ENCODE measurements at regions of chr9 and their contacts with region 1.

Region 1: GRCh38 chr9:7910426-7911020 is 110.9 kb upstream of the DMAC1 start:
- DNase-seq: peak in 1 of 2 donors; percentile 15
- ATAC-seq: peak in 5 of 8 donors; percentile 42 to 76 (median 63)
- H3K4me3 ChIP-seq: no peak overlapping the region
- H3K27ac ChIP-seq: peak overlapping the region in 2 of 10 donors; percentile 16 to 28
- H3K4me1 ChIP-seq: peaks cover 0 to 5% (median 0%) of the 10 kb centered on the region in 9 donors
- H3K27me3 ChIP-seq: no peaks in the 10 kb centered on the region
- CTCF ChIP-seq: no peak

Region 2: GRCh38 chr9:7402334-7403027 is 508.0 kb before region 1 on chr9:
- intact Hi-C with region 1: no loop called
- DNase-seq: no peak
- ATAC-seq: peak in 3 of 8 donors; percentile 17 to 35 (median 18)
- H3K4me3 ChIP-seq: no peak overlapping the region
- H3K27ac ChIP-seq: peak overlapping the region in 3 of 10 donors; percentile 2 to 24 (median 24)
- H3K4me1 ChIP-seq: peaks cover 0 to 28% (median 11%) of the 10 kb centered on the region in 9 donors
- H3K27me3 ChIP-seq: no peaks in the 10 kb centered on the region
- CTCF ChIP-seq: no peak

Region 3: GRCh38 chr9:7859701-7860334 is 50.7 kb before region 1 on chr9:
- intact Hi-C with region 1: loop called in 1 of 10 experiments (anchors 10 kb)
- DNase-seq: no peak
- ATAC-seq: no peak
- H3K4me3 ChIP-seq: no peak overlapping the region
- H3K27ac ChIP-seq: no peak overlapping the region
- H3K4me1 ChIP-seq: no peaks in the 10 kb centered on the region
- H3K27me3 ChIP-seq: no peaks in the 10 kb centered on the region
- CTCF ChIP-seq: no peak

Region 4: DNA sequence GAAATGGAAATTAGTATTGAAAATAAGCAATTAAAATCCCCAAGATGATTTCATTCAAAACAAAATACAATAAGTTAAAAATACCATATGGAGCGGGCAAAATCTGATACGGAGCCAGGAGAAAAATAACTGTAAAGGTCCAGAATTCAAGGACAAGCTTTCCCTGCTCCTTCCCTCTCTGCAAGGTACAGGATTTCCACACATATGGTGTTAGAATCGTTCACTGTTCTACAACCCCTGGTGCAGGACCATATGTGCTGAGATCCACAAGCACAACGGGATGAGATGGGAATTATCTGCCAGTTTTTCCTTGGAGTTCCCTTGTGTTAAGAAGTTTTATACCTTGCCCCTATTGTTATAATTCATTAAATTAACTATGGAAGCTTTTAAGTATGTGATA is 16.3 kb before region 1 on chr9:
- intact Hi-C with region 1: loop called in 1 of 10 experiments (anchors 2 kb)
- DNase-seq: no peak
- ATAC-seq: no peak
- H3K4me3 ChIP-seq: no peak overlapping the region
- H3K27ac ChIP-seq: no peak overlapping the region
- H3K4me1 ChIP-seq: no peaks in the 10 kb centered on the region
- H3K27me3 ChIP-seq: no peaks in the 10 kb centered on the region
- CTCF ChIP-seq: no peak

Region 5: GRCh38 chr9:7967093-7967827 is 56.7 kb after region 1 on chr9:
- intact Hi-C with region 1: loop called in 1 of 10 experiments (anchors 10 kb)
- DNase-seq: no peak
- ATAC-seq: no peak
- H3K4me3 ChIP-seq: no peak overlapping the region
- H3K27ac ChIP-seq: no peak overlapping the region
- H3K4me1 ChIP-seq: peaks cover 0 to 28% (median 0%) of the 10 kb centered on the region in 9 donors
- H3K27me3 ChIP-seq: no peaks in the 10 kb centered on the region
- CTCF ChIP-seq: no peak

Region 6: DNA sequence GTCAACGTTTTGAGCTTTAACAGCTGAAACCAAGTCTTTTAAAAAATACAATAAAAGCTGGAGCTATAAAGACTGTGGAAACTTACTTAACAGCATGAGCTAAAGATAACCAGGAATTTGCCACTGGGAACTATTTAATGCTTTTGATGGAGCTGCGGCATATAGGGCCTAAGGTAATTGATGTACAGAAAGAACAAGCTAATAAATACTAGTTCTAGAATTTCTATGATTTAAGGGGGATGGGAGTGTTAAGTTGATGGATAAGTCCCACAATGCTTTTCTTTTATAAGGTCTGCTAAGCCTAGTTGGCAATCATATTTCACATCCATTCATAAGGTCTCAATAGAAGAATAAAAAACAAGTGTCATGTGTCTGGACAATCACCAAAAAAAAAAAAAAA is 223.1 kb after region 1 on chr9:
- intact Hi-C with region 1: no loop called
- DNase-seq: no peak
- ATAC-seq: no peak
- H3K4me3 ChIP-seq: no peak overlapping the region
- H3K27ac ChIP-seq: no peak overlapping the region
- H3K4me1 ChIP-seq: no peaks in the 10 kb centered on the region
- H3K27me3 ChIP-seq: no peaks in the 10 kb centered on the region
- CTCF ChIP-seq: no peak